AG04449 (cell line): ENCODE measurements at regions of chr18 and their contacts with region 1.

Region 1: GRCh38 chr18:61502472-61502871 is 169.2 kb downstream of the CDH20 start:
- DNase-seq: peak; percentile 14
- H3K4me3 ChIP-seq: no peak overlapping the region
- CTCF ChIP-seq: peak; percentile 59

Region 2: GRCh38 chr18:60684843-60685513 is 817.5 kb before region 1 on chr18:
- CTCF ChIA-PET with region 1: interaction called, 12 read pairs
- POLR2A ChIA-PET with region 1: no interaction called
- DNase-seq: peak; percentile 4
- H3K4me3 ChIP-seq: no peak overlapping the region
- CTCF ChIP-seq: peak; percentile 21

Region 3: DNA sequence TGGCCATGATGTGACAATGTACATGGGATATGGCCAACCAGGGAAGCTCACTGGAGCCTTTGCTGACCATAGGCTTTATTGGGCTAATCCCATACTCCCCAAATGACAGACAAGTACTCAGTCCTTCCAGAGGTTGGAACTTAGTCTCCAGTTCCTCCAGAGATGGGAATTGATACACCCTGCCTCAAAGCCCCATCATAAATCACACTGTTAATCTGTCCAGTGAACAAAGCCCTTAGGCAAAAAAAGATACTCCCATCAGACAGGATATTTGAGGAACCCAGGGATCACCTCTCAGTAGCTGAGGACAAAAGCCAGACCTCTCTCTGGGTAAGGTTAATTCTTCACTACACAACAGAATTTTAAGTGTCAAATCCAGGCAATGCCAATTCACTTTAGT is 416.7 kb before region 1 on chr18:
- CTCF ChIA-PET with region 1: interaction called, 17 read pairs
- POLR2A ChIA-PET with region 1: no interaction called
- DNase-seq: no peak
- H3K4me3 ChIP-seq: no peak overlapping the region
- CTCF ChIP-seq: no peak

Region 4: GRCh38 chr18:61199171-61199903 is 303.1 kb before region 1 on chr18:
- CTCF ChIA-PET with region 1: no interaction called
- POLR2A ChIA-PET with region 1: no interaction called
- DNase-seq: peak; percentile 12
- H3K4me3 ChIP-seq: no peak overlapping the region
- CTCF ChIP-seq: no peak

Region 5: DNA sequence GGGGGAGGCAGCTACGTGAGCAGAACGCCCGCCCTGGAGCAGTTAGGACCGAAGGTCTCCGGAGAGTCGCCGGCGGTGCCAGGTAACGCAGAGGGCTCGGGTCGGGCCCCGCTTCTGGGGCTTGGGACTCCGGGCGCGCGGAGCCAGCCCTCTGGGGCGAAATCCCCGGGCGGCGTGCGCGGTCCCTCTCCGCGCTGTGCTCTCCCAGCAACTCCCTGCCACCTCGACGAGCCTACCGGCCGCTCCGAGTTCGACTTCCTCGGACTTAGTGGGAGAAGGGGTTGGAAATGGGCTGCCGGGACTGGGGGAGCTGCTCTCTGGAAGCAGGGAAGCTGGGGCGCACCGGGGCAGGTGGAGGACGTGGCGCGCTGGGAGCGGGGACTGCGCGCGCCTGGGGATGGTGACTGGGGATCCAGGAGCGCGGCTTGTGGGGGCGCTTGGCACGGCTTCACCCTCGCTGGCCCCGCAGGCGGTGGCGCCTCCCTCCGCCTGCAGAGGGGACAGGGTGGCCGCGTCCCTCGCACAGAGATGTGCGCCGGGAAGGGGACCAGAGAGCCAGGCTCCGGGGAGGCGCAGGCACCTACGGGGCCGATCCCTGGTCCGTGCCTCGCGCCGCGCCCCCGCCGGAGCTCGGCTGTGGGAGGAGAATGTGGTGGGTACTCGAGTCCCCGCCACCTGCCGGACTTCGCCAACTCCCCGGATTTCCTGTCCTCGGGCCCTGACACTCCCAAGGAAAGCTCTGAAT is 168.6 kb before region 1 on chr18:
- CTCF ChIA-PET with region 1: interaction called, 596 read pairs
- POLR2A ChIA-PET with region 1: no interaction called
- DNase-seq: no peak
- H3K4me3 ChIP-seq: peak overlapping the region; percentile 48
- CTCF ChIP-seq: no peak

Region 6: GRCh38 chr18:61551586-61551985 is 49.1 kb after region 1 on chr18:
- CTCF ChIA-PET with region 1: no interaction called
- POLR2A ChIA-PET with region 1: no interaction called
- DNase-seq: peak; percentile 62
- H3K4me3 ChIP-seq: no peak overlapping the region
- CTCF ChIP-seq: peak; percentile 86

Region 7: GRCh38 chr18:62131301-62131909 is 628.9 kb after region 1 on chr18:
- CTCF ChIA-PET with region 1: interaction called, 13 read pairs
- POLR2A ChIA-PET with region 1: no interaction called
- DNase-seq: no peak
- H3K4me3 ChIP-seq: no peak overlapping the region
- CTCF ChIP-seq: peak; percentile 71